Colonic mucosa (tissue), 4 donors: ENCODE measurements at regions of chr2 and their contacts with region 1.

Region 1: GRCh38 chr2:232854082-232854481 is 16.0 kb upstream of the SNORC start:
- DNase-seq: peak; percentile 64
- H3K4me3 ChIP-seq: no peak overlapping the region
- H3K27ac ChIP-seq: no peak overlapping the region
- H3K4me1 ChIP-seq: no peaks in the 10 kb centered on the region
- H3K27me3 ChIP-seq: no peaks in the 10 kb centered on the region
- CTCF ChIP-seq: no peak

Region 2: GRCh38 chr2:233033672-233034071 is 179.6 kb after region 1 on chr2:
- intact Hi-C with region 1: loop called (anchors 5 kb)
- DNase-seq: no peak
- H3K4me3 ChIP-seq: no peak overlapping the region
- H3K27ac ChIP-seq: no peak overlapping the region
- H3K4me1 ChIP-seq: no peaks in the 10 kb centered on the region
- H3K27me3 ChIP-seq: no peaks in the 10 kb centered on the region
- CTCF ChIP-seq: no peak

Region 3: GRCh38 chr2:233059797-233060500 is 205.9 kb after region 1 on chr2 and contains the start of gene INPP5D:
- intact Hi-C with region 1: loop called (anchors 5 kb)
- DNase-seq: peak; percentile 53
- H3K4me3 ChIP-seq: peak within 1 kb of the TSS; percentile 40
- H3K27ac ChIP-seq: peak within 1 kb of the TSS; percentile 64
- H3K4me1 ChIP-seq: peaks cover 5% of the 10 kb centered on the region
- H3K27me3 ChIP-seq: no peaks in the 10 kb centered on the region
- CTCF ChIP-seq: no peak
- total RNA-seq, gene INPP5D: 6.5 to 7.1 TPM